GM12878 (cell line): ENCODE measurements at regions of chr10 and their contacts with region 1.

Region 1: GRCh38 chr10:72126184-72126871 is 38.0 kb upstream of the SPOCK2 start:
- DNase-seq: no peak
- ATAC-seq: peak; percentile 42
- H3K4me3 ChIP-seq: no peak overlapping the region
- H3K27ac ChIP-seq: no peak overlapping the region
- H3K4me1 ChIP-seq: no peaks in the 10 kb centered on the region
- H3K27me3 ChIP-seq: no peaks in the 10 kb centered on the region
- CTCF ChIP-seq: peak; percentile 13 to 46 (median 28); a peak in 4 of 6 replicates
- EP300 ChIP-seq: no peak
- POLR2A ChIP-seq: no peak
- RAD21 ChIP-seq: peak; percentile 57

Region 2: DNA sequence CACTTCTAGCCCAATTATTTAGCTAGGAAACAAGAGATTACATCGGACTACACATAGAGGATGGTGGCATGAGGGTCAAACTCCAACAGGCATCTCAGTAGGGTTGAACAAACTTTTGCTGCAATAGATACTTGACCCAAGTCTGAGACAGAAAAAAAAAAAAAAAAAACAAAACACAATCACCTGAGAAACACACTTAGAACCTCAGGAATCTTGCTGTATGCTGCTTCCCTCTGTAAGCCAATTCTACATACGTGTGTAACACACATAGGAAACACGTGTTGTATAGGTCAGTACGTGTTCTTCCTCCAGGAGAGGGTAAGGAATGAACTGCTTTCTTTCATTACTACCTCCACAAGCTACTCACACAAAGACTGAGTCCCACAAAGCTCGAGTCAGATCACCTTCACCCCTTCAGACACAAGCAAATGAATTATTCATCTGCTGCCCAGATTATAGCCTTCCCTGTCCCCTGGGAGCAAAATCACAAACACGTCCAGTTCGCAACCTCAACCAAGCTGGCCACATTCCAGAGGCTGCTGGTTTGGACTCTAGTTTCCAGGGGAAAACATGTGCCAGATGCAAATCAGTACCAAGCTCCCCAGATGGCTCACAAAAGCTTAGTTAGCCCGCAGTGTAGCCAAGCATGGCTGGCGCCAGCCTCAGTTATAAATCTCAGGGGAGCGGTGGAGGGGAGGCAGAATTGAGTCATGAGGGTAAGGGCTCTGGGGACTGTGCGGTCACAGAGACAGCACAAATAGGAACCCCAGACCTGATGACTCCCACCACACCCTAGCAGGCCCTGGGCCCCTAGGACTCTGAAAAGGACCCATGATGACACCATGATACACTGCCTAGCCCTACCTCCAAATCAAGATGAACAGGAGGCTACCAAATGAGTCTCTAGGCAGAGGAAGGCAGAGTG is 290.4 kb before region 1 on chr10:
- CTCF ChIA-PET with region 1: no interaction called
- POLR2A ChIA-PET with region 1: no interaction called
- RAD21 ChIA-PET with region 1: no interaction called
- SMC1A ChIA-PET with region 1: no interaction called
- in situ Hi-C with region 1: no loop called
- intact Hi-C with region 1: no loop called
- DNase-seq: peak; percentile 97
- ATAC-seq: peak; percentile 97
- H3K4me3 ChIP-seq: peak overlapping the region; percentile 44
- H3K27ac ChIP-seq: peak overlapping the region; percentile 89
- H3K4me1 ChIP-seq: peaks cover 61% of the 10 kb centered on the region
- H3K27me3 ChIP-seq: no peaks in the 10 kb centered on the region
- CTCF ChIP-seq: no peak
- EP300 ChIP-seq: peak; percentile 87 to 93
- POLR2A ChIP-seq: no peak
- RAD21 ChIP-seq: no peak

Region 3: GRCh38 chr10:71999360-72000072 is 126.8 kb before region 1 on chr10:
- CTCF ChIA-PET with region 1: no interaction called
- POLR2A ChIA-PET with region 1: no interaction called
- RAD21 ChIA-PET with region 1: no interaction called
- SMC1A ChIA-PET with region 1: no interaction called
- in situ Hi-C with region 1: no loop called
- intact Hi-C with region 1: no loop called
- DNase-seq: no peak
- ATAC-seq: peak; percentile 60
- H3K4me3 ChIP-seq: no peak overlapping the region
- H3K27ac ChIP-seq: no peak overlapping the region
- H3K4me1 ChIP-seq: no peaks in the 10 kb centered on the region
- H3K27me3 ChIP-seq: no peaks in the 10 kb centered on the region
- CTCF ChIP-seq: no peak
- EP300 ChIP-seq: no peak
- POLR2A ChIP-seq: no peak
- RAD21 ChIP-seq: no peak

Region 4: GRCh38 chr10:72114706-72115450 is 11.4 kb before region 1 on chr10:
- CTCF ChIA-PET with region 1: interaction called, 16 read pairs
- POLR2A ChIA-PET with region 1: interaction called, 3 read pairs
- RAD21 ChIA-PET with region 1: no interaction called
- SMC1A ChIA-PET with region 1: interaction called, 18 read pairs
- in situ Hi-C with region 1: no loop called
- intact Hi-C with region 1: no loop called
- DNase-seq: no peak
- ATAC-seq: no peak
- H3K4me3 ChIP-seq: no peak overlapping the region
- H3K27ac ChIP-seq: no peak overlapping the region
- H3K4me1 ChIP-seq: no peaks in the 10 kb centered on the region
- H3K27me3 ChIP-seq: no peaks in the 10 kb centered on the region
- CTCF ChIP-seq: no peak
- EP300 ChIP-seq: no peak
- POLR2A ChIP-seq: no peak
- RAD21 ChIP-seq: no peak

Region 5: GRCh38 chr10:72140174-72140573 is 13.8 kb after region 1 on chr10:
- CTCF ChIA-PET with region 1: interaction called, 7 read pairs
- POLR2A ChIA-PET with region 1: interaction called, 7 read pairs
- RAD21 ChIA-PET with region 1: interaction called, 3 read pairs
- SMC1A ChIA-PET with region 1: interaction called, 18 read pairs
- in situ Hi-C with region 1: no loop called
- intact Hi-C with region 1: no loop called
- DNase-seq: no peak
- ATAC-seq: no peak
- H3K4me3 ChIP-seq: no peak overlapping the region
- H3K27ac ChIP-seq: no peak overlapping the region
- H3K4me1 ChIP-seq: peaks cover 10% of the 10 kb centered on the region
- H3K27me3 ChIP-seq: no peaks in the 10 kb centered on the region
- CTCF ChIP-seq: no peak
- EP300 ChIP-seq: no peak
- POLR2A ChIP-seq: no peak
- RAD21 ChIP-seq: no peak

Region 6: GRCh38 chr10:72426986-72427385 is 300.7 kb after region 1 on chr10:
- CTCF ChIA-PET with region 1: no interaction called
- POLR2A ChIA-PET with region 1: no interaction called
- RAD21 ChIA-PET with region 1: no interaction called
- SMC1A ChIA-PET with region 1: no interaction called
- in situ Hi-C with region 1: no loop called
- intact Hi-C with region 1: no loop called
- DNase-seq: no peak
- ATAC-seq: no peak
- H3K4me3 ChIP-seq: no peak overlapping the region
- H3K27ac ChIP-seq: no peak overlapping the region
- H3K4me1 ChIP-seq: no peaks in the 10 kb centered on the region
- H3K27me3 ChIP-seq: no peaks in the 10 kb centered on the region
- CTCF ChIP-seq: no peak
- EP300 ChIP-seq: no peak
- POLR2A ChIP-seq: no peak
- RAD21 ChIP-seq: no peak